Thyroid gland (tissue), 4 donors: ENCODE measurements at regions of chr6 and their contacts with region 1.

Region 1: DNA sequence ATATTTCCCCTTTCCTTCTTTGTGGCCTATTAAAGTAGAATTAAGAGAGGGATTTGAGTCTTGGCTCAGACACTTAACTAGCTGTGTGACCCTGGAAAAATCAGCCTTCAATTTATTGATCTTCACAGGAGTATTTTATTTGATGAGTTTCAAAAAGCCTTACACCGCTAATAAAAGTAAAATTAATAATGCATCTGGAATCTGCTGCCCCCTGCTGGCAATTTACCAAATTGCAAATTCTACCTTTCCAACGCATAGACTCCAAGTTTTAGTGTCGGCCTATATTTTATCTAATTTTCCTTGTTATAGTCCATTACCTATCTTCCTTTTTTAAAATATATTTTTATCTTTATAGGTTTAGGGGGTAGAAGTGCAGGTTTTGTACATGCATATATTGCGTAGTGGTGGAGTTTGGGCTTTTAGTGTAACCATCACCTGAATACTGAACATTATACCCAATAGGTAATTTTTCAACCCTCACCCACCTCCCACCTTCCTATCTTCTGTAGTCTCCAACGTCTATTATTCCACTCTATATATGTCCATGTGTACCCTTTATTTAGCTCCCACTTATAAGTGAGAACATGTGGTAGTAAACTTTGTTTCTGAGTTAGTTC is 46.3 kb downstream of the GOPC start:
- DNase-seq: peak; percentile 37 to 41
- H3K4me3 ChIP-seq: no peak overlapping the region
- H3K27ac ChIP-seq: no peak overlapping the region
- H3K4me1 ChIP-seq: peaks cover 12 to 18% of the 10 kb centered on the region in 2 donors
- H3K27me3 ChIP-seq: no peaks in the 10 kb centered on the region
- CTCF ChIP-seq: peak; percentile 65 to 93 (median 78)
- POLR2A ChIP-seq: no peak

Region 2: GRCh38 chr6:117449549-117450439 is 106.2 kb before region 1 on chr6:
- intact Hi-C with region 1: loop called (anchors 2 kb)
- DNase-seq: peak; percentile 64 to 67
- H3K4me3 ChIP-seq: no peak overlapping the region
- H3K27ac ChIP-seq: no peak overlapping the region
- H3K4me1 ChIP-seq: peaks cover 7 to 8% of the 10 kb centered on the region in 2 donors
- H3K27me3 ChIP-seq: no peaks in the 10 kb centered on the region
- CTCF ChIP-seq: peak; percentile 48 to 86 (median 67)
- POLR2A ChIP-seq: no peak

Region 3: GRCh38 chr6:117482240-117483003 is 73.6 kb before region 1 on chr6 and contains the start of gene DCBLD1:
- intact Hi-C with region 1: loop called (anchors 10 kb)
- DNase-seq: peak; percentile 84 to 87
- H3K4me3 ChIP-seq: peak within 1 kb of the TSS; percentile 66 to 83 (median 80)
- H3K27ac ChIP-seq: peak within 1 kb of the TSS; percentile 75 to 91 (median 90)
- H3K4me1 ChIP-seq: peaks cover 7 to 17% of the 10 kb centered on the region in 2 donors
- H3K27me3 ChIP-seq: no peaks in the 10 kb centered on the region
- CTCF ChIP-seq: peak in 2 of 6 experiments; percentile 8 to 15
- POLR2A ChIP-seq: peak in 1 of 2 donors; percentile 68
- total RNA-seq, gene DCBLD1: 13.5 to 25.9 (median 21.2) TPM